Activated T-helper 2 cell treated with anti-CD3 and anti-CD28 coated beads, Interferon-gamma antibody, Interleukin-2, Interleukin-4, amounts not matched to agents 10 μg/mL and 5 μg/mL and 100 μg/mL, durations not matched to agents 14 hours and 24 hours and 36 hours (primary cell): ENCODE measurements at regions of chr16 and their contacts with region 1.

Region 1: GRCh38 chr16:85986931-85987749 is 88.2 kb downstream of the IRF8 start:
- DNase-seq: no peak
- H3K4me3 Mint-ChIP-seq: no peak overlapping the region
- H3K27ac Mint-ChIP-seq: peak overlapping the region; percentile 0
- H3K4me1 Mint-ChIP-seq: peaks cover 48% of the 10 kb centered on the region
- H3K27me3 Mint-ChIP-seq: no peaks in the 10 kb centered on the region

Region 2: DNA sequence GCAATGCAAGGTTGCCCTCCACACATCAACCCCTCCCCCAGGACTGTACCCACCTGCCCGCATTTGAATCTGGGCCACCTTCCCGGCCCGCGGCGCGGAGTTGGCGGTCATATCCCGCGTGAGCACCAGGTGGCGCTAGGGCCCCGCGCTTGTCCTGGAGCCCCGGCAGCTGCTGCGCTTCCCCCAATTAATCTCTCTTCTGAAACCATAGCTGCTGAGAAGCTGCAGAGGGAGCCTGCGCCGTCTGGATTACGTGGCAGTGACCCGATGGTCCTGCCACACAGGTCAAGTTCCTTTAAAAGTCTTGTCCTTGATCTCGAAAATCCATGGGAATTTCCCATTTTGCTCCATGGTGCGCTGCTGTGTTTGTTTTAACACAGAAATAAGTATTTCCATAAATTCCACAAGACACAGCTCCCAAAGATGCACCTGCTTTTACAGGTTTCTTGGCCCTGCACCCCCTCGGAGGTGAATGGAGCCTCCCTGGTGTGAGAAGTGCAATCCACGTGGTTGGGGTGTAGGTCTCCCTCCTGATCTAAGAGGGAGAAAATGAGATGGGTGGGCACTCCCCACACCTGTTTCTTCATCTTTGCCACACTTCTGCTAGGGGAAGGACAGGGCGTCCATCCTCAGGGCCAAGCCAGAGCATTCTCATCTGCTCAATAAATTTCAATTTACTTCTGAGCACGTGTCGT is 165.6 kb before region 1 on chr16:
- intact Hi-C with region 1: loop called (anchors 1 kb)
- DNase-seq: peak; percentile 61
- H3K4me3 Mint-ChIP-seq: no peak overlapping the region
- H3K27ac Mint-ChIP-seq: no peak overlapping the region
- H3K4me1 Mint-ChIP-seq: no peaks in the 10 kb centered on the region
- H3K27me3 Mint-ChIP-seq: peaks cover 5% of the 10 kb centered on the region

Region 3: GRCh38 chr16:85888405-85889331 is 98.5 kb before region 1 on chr16:
- intact Hi-C with region 1: loop called (anchors 5 kb)
- DNase-seq: no peak
- H3K4me3 Mint-ChIP-seq: no peak overlapping the region
- H3K27ac Mint-ChIP-seq: peak overlapping the region; percentile 48
- H3K4me1 Mint-ChIP-seq: peaks cover 36% of the 10 kb centered on the region
- H3K27me3 Mint-ChIP-seq: peaks cover 38% of the 10 kb centered on the region

Region 4: DNA sequence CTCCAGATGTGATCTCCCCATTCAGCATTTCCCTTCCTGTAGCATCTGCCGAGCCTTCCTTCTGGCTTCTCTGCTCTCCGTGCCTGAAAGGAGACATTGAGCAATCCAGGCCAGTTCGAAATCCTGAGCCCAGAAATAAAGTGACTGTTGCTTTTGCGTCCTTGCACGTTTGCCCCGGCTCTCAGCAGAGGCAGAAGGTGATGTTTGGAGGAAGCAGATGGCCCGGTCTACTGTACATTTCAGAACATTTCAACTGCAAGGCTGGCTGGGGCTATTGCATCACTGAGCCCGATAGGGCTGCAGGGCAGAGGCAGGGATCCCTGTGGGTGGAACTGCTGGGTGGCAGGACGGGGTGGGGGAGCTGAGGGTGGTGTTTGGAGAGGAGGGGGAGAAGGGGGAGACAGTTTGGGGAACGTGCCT is 58.7 kb before region 1 on chr16:
- intact Hi-C with region 1: no loop called
- DNase-seq: no peak
- H3K4me3 Mint-ChIP-seq: no peak overlapping the region
- H3K27ac Mint-ChIP-seq: no peak overlapping the region
- H3K4me1 Mint-ChIP-seq: peaks cover 22% of the 10 kb centered on the region
- H3K27me3 Mint-ChIP-seq: peaks cover 3% of the 10 kb centered on the region

Region 5: GRCh38 chr16:85998868-85999729 is 12.0 kb after region 1 on chr16:
- intact Hi-C with region 1: loop called (anchors 1 kb)
- DNase-seq: no peak
- H3K4me3 Mint-ChIP-seq: no peak overlapping the region
- H3K27ac Mint-ChIP-seq: peak overlapping the region; percentile 34
- H3K4me1 Mint-ChIP-seq: peaks cover 26% of the 10 kb centered on the region
- H3K27me3 Mint-ChIP-seq: no peaks in the 10 kb centered on the region

Region 6: DNA sequence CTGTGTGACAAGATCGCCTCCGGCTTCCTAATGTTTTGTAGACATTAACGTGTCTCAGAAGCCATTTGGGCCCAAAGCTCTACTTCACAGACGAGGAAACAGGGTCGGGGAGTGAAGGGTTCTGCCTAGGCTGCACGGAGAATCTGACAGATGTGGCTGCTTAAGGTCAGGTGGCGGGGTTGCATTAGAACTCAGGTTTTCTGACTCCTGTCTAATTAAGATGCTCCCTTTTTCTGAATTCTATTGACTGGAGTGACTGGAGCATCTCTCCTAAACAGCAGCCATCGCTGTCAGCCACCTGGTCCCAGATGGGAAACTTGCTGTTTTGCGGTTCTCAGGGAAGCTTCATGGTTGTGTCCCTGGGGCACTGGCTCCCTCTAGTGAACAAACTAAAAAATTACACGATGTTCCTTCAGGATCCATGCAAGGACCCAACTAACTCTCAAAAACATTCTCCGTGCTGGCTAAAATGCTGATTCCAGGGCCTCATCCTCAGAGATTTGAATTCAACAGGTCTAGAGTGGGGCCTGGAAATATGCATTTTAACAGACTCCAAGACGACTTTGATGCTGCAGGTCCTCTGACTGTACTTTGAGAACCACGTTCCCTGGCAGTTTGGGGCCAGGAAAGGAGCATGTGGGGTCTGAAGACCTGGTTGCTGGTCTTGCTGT is 29.2 kb after region 1 on chr16:
- intact Hi-C with region 1: loop called (anchors 2 kb)
- DNase-seq: no peak
- H3K4me3 Mint-ChIP-seq: no peak overlapping the region
- H3K27ac Mint-ChIP-seq: no peak overlapping the region
- H3K4me1 Mint-ChIP-seq: peaks cover 2% of the 10 kb centered on the region
- H3K27me3 Mint-ChIP-seq: peaks cover 4% of the 10 kb centered on the region